ENCODE measurements at regions of chr16 and their contacts with region 1.

Region 1: GRCh38 chr16:9521749-9522370 is 430.4 kb downstream of the HAPSTR1 start:
- DNase-seq: no peak
- H3K4me3 ChIP-seq: no peak overlapping the region
- H3K27ac ChIP-seq: no peak overlapping the region
- H3K4me1 ChIP-seq: peaks cover 0 to 3% (median 0%) of the 10 kb centered on the region in 4 donors
- H3K27me3 ChIP-seq: no peaks in the 10 kb centered on the region
- CTCF ChIP-seq: no peak
- EP300 ChIP-seq: no peak
- POLR2A ChIP-seq: no peak

Region 2: DNA sequence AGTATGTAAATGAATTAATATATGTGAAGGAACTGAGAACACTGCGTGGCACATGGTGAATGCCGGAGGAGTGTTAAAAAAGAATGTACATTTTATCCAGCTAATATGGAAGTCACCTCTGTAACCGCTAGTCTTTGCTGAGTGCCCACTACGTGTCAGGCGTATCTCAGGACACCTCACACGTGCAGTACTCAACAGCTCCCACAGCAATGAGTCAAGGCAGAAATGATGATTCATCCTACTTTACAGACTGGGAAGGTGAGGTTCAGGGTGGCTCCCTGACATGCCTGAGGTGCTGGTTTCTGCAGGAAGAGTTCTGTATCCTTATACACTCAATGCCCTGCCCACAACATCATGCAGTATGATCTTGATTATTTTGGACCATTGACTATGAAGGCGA is 56.6 kb after region 1 on chr16:
- in situ Hi-C with region 1: no loop called
- intact Hi-C with region 1: loop called (anchors 10 kb)
- DNase-seq: no peak
- H3K4me3 ChIP-seq: no peak overlapping the region
- H3K27ac ChIP-seq: no peak overlapping the region
- H3K4me1 ChIP-seq: no peaks in the 10 kb centered on the region
- H3K27me3 ChIP-seq: no peaks in the 10 kb centered on the region
- CTCF ChIP-seq: no peak
- EP300 ChIP-seq: no peak
- POLR2A ChIP-seq: no peak

Measured in transverse colon (tissue), 4 donors.